ENCODE measurements at regions of chr12 and their contacts with region 1.

Region 1: GRCh38 chr12:121334513-121335343 is 17.5 kb downstream of the ANAPC5 start:
- DNase-seq: no peak
- ATAC-seq: peak; percentile 96
- H3K4me3 ChIP-seq: no peak overlapping the region
- H3K27ac ChIP-seq: no peak overlapping the region
- H3K4me1 ChIP-seq: no peaks in the 10 kb centered on the region
- H3K27me3 ChIP-seq: no peaks in the 10 kb centered on the region
- CTCF ChIP-seq: peak; percentile 85

Region 2: GRCh38 chr12:120971299-120972179 is 363.2 kb before region 1 on chr12:
- intact Hi-C with region 1: no loop called
- DNase-seq: no peak
- ATAC-seq: peak; percentile 86
- H3K4me3 ChIP-seq: no peak overlapping the region
- H3K27ac ChIP-seq: no peak overlapping the region
- H3K4me1 ChIP-seq: no peaks in the 10 kb centered on the region
- H3K27me3 ChIP-seq: no peaks in the 10 kb centered on the region
- CTCF ChIP-seq: peak; percentile 71

Region 3: DNA sequence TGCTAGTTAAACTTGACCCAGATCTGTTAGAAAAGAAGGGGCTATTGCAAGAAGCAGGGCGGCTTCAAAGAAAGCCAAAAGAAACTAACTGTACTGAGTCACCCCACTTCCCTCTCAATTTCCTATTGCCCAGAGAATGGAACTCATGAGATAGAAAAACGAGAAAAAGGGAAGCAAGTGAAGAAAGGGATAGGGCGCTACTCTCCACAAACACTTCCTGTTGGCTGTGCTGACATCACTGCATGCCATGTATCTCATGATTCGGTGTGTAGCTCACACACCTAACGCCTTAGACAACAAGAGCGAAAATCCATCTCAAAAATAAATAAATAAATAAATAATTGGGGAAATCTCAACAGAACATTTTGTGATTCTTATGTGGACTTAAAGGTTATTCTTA is 137.8 kb before region 1 on chr12:
- intact Hi-C with region 1: no loop called
- DNase-seq: no peak
- ATAC-seq: peak; percentile 94
- H3K4me3 ChIP-seq: no peak overlapping the region
- H3K27ac ChIP-seq: no peak overlapping the region
- H3K4me1 ChIP-seq: no peaks in the 10 kb centered on the region
- H3K27me3 ChIP-seq: no peaks in the 10 kb centered on the region
- CTCF ChIP-seq: no peak

Region 4: DNA sequence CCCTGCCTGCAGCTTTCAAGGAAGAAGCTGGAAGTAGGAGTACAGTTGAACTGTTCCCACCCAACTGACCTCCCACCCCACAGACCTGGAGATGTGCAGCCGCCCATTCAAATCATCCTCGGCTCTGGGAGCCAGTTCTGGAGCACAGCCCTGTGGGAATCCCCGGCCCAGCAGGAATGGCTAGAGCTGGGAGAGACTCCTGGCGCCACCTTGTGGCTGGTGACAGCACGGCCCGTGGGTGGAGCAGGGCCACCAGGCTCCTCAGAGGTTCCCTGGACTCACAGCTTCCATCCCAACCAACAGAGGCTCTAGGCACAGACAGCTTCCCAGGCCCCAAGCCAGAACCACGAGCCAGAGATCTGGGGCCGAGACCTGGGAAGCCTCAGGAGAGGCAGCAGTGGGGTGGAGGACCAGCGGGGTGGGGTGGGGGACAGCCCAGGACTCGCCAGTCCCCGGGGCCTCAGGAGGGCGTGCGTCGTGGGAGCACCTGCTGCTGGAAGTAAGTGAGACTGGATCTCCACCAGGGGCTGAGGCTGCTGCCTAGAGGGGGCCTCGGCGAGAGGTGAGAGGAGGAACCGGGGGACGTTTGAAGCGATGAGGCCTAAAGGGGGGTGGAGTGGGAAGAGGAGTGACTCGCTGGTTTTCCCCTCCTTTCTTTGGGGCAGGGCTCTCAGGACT is 108.6 kb after region 1 on chr12:
- intact Hi-C with region 1: loop called (anchors 10 kb)
- DNase-seq: peak; percentile 90
- ATAC-seq: peak; percentile 93
- H3K4me3 ChIP-seq: no peak overlapping the region
- H3K27ac ChIP-seq: no peak overlapping the region
- H3K4me1 ChIP-seq: no peaks in the 10 kb centered on the region
- H3K27me3 ChIP-seq: no peaks in the 10 kb centered on the region
- CTCF ChIP-seq: peak; percentile 78

Measured in upper lobe of right lung (tissue), 1 donor.